Naive thymus-derived CD8-positive, alpha-beta T cell (primary cell): ENCODE measurements at regions of chr5 and their contacts with region 1.

Region 1: DNA sequence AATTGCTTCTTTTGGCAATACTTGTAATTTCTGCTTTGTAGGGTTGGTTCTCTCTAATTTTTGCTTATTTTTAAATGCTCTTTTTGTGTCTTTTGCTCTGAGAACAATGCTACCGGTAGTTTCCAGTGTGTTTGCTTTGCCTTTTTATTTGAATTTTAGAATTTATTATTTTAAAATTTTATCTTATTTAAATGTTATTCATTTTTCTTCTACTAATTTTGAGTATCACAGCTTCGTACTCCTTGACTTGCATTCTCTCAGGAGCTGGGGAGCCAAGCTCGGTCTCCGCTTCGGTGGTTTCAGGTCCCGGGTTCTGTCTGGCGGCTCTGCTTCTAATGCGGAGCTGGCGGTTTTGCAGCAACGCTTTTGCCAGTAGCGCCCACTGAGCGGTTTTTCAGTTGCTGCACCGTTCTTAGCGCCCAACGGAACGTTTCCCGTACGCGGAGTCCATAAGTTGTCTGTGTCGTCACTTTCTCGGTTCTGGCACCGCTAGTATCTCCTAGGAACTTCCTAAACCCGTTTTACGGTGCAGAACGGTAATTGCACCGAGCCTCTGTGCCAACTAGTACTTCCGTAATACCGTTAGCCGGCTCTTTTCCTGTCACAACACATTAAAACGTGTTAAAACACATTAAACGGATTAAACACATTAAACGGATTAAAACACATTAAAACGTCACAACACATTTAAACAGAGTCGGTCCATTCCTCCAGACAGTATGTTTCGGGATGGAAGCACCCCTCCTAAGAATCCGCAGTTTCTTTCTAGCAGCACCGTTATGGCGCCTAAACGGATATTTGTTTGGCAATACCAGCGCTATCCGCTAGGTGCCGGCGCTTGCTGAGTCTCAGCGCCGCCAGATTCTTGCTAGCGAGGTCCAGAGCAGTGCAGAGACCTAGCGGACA is 45.6 kb downstream of the ANXA2R start:
- DNase-seq: peak; percentile 71 to 93 (median 87)
- ATAC-seq: peak; percentile 56 to 63
- H3K4me3 Mint-ChIP-seq: peak overlapping the region; percentile 87 to 100 (median 100)
- H3K27ac Mint-ChIP-seq: peak overlapping the region; percentile 97 to 100 (median 100)
- H3K4me1 Mint-ChIP-seq: peaks cover 12 to 38% (median 31%) of the 10 kb centered on the region in 4 donors
- H3K27me3 Mint-ChIP-seq: no peaks in the 10 kb centered on the region

Region 2: DNA sequence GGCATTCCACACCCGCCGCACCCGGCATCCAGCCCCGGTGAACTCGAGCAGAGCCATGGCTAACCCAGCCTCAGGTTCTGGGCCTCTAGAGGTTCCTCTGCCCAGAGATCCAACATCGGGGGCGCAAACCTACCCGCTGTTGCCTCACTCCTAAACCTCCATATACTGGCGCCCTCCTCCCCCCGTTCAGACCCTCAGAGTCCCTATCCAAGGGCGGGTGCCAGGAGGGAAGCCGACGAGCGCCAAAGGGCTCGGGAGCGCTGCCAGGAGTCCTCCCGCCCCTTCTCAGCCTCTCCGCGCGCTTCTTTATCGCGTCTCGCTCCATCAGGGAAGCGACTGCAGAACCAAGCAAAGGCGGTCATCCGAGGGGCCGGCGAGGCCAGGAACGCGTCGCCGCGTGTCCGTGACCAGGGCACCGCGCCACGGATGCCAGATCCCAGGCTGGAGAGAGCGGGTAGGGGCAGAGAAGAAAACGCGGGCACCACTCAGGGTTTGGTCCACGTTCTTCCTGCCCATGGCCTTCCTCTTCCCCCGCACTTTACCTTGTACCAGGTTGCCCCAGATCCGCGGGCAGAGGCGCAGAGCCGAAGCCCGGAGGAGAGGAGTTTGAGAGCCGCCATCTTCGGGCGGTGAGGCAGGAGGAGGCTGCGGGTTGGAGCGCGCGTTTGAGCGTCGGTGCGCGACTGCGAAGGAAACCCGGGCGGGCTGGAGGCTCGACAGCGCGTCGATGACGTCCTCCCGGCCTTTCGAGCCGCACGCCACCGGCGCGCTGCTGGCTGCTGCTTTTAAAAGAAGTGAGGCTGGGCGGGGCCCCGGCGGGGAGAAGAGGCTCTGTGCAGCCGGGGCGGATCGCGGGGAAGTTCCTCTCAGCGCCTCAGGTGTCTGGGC is 1124.5 kb before region 1 on chr5 and contains the start of gene OXCT1:
- POLR2A ChIA-PET with region 1: interaction called, 10 read pairs
- DNase-seq: peak; percentile 82 to 97 (median 93)
- ATAC-seq: peak; percentile 93 to 94
- H3K4me3 Mint-ChIP-seq: peak within 1 kb of the TSS; percentile 86 to 94 (median 90)
- H3K27ac Mint-ChIP-seq: peak within 1 kb of the TSS; percentile 90 to 99 (median 96)
- H3K4me1 Mint-ChIP-seq: peaks cover 27 to 58% (median 48%) of the 10 kb centered on the region in 4 donors
- H3K27me3 Mint-ChIP-seq: no peaks in the 10 kb centered on the region
- polyA plus RNA-seq, gene OXCT1: 24.5 to 27.1 (median 25.1) TPM

Region 3: DNA sequence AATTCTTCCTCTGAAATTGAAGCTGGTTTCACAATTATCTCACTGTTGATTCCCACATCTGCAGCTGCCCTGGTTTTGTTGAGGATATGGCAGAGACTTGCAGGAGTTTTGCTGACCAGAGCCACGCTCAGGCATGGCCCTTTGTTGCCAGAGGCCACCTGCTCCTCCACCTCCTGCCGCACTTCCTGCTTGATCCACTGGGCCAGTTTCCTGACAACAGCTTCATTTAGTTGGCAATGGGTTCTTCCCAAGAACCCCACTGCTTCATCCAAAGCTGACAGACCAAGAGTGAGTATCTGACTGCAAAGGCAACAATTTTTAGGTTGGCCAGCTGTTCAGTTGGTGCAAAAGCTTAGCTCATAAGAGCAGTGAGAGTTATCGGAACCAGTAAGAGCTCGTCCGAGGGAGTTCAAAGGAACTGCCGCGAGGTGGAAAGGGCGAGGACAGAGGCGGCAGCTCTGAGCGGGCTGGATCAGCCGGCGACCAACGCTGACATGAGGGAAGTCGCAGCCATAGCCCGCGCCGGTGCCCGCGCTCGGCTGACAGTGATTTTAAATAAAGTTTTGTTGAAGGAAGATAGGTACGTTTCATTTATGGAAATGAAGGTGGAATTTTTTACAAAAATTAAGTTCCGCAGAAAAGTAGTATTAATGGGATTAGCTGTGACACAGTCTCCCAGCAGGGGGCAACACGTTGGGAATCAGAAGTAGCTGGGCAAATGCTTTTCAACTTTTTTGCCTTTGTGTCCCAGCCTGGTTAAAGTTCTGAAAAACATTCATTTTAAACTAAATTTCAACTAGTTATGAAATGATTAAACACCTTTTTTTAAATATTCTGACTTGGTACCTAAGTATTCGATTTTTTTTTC is 1026.4 kb before region 1 on chr5:
- POLR2A ChIA-PET with region 1: no interaction called
- DNase-seq: no peak
- ATAC-seq: no peak
- H3K4me3 Mint-ChIP-seq: no peak overlapping the region
- H3K27ac Mint-ChIP-seq: no peak overlapping the region
- H3K4me1 Mint-ChIP-seq: no peaks in the 10 kb centered on the region
- H3K27me3 Mint-ChIP-seq: peaks cover 5 to 27% (median 6%) of the 10 kb centered on the region in 5 donors

Region 4: DNA sequence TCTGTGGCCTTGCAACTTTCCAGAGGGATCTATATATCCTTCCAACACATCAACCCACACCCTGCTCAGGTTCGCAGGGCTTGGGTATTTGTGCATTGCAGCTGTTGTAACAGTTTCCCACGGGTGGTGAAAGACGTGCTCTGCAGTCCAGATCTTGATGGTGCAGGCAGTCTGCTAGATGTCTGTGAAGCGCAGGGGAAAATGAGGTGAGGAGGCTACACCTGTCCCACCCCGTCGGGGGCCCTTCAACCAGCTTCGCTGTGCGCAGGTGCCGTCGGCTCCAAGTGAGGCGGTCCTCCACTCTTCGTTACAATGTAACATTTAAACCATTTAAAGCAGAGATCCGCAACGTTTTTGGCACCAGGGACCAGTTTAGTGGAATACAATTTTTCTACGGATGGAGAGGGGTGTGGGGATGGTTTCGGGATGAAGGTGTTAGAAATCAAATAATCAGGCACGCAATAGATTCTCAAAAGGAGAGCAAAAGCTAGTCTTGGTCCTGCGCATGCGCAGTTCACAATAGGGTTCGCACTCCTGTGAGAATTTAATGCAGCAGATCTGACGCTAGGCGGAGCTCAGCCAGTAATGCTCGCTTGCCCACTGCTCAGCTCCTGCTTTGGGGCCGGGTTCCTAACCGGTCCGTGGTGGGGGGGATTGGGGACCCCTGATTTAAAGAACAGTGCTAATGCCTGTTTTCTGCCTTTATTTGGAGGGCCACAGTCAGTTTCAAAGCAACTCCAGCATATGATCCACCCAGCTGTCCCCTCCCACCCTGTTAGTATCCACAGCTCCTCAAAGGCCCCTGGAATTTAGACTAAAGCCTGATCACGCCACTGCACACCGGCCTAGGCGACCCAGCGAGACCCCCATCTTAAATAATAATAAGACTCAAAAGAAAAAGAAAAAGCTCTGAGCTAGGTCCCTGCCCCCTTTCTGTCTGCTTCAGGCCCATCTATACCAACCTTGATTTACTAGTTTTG is 85.7 kb before region 1 on chr5:
- POLR2A ChIA-PET with region 1: interaction called, 73 read pairs
- DNase-seq: peak; percentile 78 to 96 (median 90)
- ATAC-seq: peak; percentile 92 to 93
- H3K4me3 Mint-ChIP-seq: peak overlapping the region; percentile 82 to 98 (median 94)
- H3K27ac Mint-ChIP-seq: peak overlapping the region; percentile 89 to 98 (median 97)
- H3K4me1 Mint-ChIP-seq: peaks cover 2 to 22% (median 18%) of the 10 kb centered on the region in 4 donors
- H3K27me3 Mint-ChIP-seq: peaks cover 0 to 3% (median 0%) of the 10 kb centered on the region in 5 donors

Region 5: DNA sequence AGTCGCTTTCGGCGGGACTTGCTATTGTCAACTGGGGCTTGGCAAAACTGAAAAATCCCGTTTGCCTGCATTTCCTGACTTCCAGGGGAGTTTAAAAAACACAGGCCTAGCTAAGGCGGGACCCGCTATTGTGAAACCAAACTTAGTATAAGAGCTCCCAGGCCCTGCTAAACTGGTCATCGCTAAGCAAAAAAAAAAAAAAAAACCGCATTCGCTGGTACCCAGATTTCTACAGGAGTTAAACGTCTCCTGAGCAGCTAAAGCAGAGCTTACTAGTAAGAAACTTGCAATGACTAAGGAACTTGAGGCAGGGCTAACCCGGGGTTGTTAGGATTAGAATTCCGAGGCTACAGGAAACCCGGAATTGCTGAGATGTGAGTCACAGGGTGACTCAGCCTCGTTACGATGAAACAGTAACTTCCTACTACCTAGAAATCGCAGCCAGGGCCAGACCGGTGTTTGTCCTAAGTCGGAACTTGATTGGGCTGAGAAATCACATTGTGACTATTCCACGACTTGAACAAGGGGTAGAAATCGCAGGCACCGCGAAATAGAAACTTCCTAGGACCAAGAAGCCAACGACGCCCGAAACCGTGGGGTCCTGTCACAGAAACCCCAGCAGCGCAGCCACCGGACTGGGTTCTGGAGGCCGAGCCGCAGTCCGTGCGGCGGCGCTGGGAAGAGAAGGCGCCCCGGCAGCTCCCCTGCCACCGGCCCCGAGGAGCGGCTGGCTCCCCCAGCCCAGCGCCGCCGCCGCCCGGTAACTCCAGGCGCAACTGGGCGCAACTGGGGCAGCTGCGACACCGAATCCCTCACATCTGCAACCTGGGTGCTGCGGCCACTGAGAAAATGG is 43.8 kb before region 1 on chr5:
- POLR2A ChIA-PET with region 1: interaction called, 411 read pairs
- DNase-seq: peak in 8 of 10 donors; percentile 27 to 72 (median 54)
- ATAC-seq: peak; percentile 8 to 37
- H3K4me3 Mint-ChIP-seq: peak overlapping the region; percentile 91 to 99 (median 96)
- H3K27ac Mint-ChIP-seq: peak overlapping the region; percentile 99 to 100 (median 100)
- H3K4me1 Mint-ChIP-seq: peaks cover 13 to 36% (median 26%) of the 10 kb centered on the region in 4 donors
- H3K27me3 Mint-ChIP-seq: no peaks in the 10 kb centered on the region

Region 6: GRCh38 chr5:42965934-42966333 is 28.6 kb before region 1 on chr5:
- POLR2A ChIA-PET with region 1: interaction called, 14 read pairs
- DNase-seq: no peak
- ATAC-seq: no peak
- H3K4me3 Mint-ChIP-seq: peak overlapping the region in 2 of 10 donors; percentile 21 to 62
- H3K27ac Mint-ChIP-seq: peak overlapping the region in 1 of 10 donors; percentile 76
- H3K4me1 Mint-ChIP-seq: peaks cover 4 to 24% (median 16%) of the 10 kb centered on the region in 4 donors
- H3K27me3 Mint-ChIP-seq: no peaks in the 10 kb centered on the region

Region 7: DNA sequence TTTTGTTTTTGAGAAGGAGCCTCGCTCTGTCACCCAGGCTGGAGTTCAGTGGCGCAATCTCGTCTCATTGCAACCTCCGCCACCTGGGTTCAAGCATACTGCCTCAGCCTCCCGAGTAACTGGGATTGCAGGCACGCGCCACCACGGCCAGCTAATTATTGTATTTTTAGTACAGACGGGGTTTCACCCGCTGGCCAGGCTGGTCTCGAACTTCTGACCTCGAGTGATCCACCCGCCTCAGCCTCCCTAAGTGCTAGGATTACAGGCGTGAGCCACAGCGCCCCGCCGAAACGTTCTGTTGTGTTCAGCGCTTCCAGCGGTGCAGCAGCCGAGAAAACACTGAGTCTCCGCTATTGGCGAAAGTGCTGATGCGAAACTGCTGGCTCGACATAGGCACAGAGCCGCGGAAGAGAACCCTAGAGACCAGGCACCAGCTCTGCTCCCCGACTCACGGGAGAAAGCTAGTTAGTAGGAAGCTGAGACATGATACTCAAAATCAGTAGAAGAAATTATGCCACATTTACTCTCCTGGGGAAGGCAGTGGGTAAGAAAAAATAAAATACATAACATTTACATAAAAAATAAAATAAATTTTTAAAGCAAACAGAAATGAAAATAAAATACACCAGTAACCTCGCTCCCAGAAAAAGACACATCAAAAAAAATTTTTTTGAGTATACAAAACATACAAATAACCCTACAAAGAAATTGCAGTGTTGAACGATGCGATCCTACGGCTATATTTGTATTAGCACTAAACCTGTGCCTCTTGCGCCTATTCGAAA is 14.1 kb after region 1 on chr5:
- POLR2A ChIA-PET with region 1: interaction called, 775 read pairs
- DNase-seq: peak; percentile 80 to 96 (median 91)
- ATAC-seq: peak; percentile 63 to 71
- H3K4me3 Mint-ChIP-seq: peak overlapping the region; percentile 83 to 99 (median 94)
- H3K27ac Mint-ChIP-seq: peak overlapping the region; percentile 92 to 100 (median 99)
- H3K4me1 Mint-ChIP-seq: peaks cover 17 to 40% (median 28%) of the 10 kb centered on the region in 4 donors
- H3K27me3 Mint-ChIP-seq: no peaks in the 10 kb centered on the region